ENCODE measurements at regions of chr15 and their contacts with region 1.

Region 1: GRCh38 chr15:43187544-43188155 is 2.4 kb downstream of the CCNDBP1 start:
- DNase-seq: no peak
- ATAC-seq: no peak

Region 2: GRCh38 chr15:42994546-42994945 is 193.1 kb before region 1 on chr15:
- intact Hi-C with region 1: no loop called
- DNase-seq: no peak
- ATAC-seq: no peak

Region 3: GRCh38 chr15:43093026-43093425 is 94.6 kb before region 1 on chr15:
- intact Hi-C with region 1: no loop called
- DNase-seq: no peak
- ATAC-seq: peak in 1 of 2 donors; percentile 44

Region 4: DNA sequence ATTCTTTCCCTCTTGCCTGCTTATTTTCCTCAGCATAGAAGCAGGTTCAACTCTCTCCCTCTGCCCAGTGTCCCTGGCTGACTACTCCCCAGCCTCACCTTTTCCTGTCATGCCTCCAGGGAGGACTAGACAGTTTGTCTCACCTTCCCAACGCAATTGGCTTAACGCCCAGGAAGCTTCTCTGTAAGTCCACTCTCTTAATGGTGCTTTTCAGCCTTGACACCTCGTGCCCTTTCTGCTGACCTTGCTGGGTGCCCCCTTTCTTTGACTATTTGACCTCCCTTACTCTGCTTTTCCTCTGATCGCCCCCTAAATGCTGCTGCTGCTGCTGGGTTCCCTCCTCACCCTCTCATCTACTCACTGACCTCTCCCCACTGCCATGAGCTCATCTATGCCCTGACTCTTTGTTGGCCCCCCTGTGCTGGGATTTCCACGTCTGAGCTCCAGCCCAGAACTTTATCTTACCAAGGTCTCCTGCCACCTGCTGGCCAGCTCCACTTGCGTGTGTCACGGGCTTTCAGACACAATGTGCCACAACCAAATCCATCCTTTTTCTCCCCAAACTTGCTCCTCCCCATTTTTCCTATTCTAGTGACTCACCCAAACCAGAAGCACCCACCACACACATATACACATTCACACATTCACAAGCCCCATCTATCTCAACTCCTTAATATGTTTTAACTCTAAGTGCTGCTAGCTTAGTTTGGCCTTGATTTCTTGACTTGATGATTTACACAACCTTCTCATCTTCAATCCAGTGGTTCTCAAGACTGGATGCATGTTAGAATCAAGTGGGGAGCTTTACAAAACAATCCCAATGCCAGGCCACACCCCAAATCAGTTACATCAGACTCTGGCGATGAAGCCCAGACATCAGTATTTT is 16.6 kb after region 1 on chr15:
- intact Hi-C with region 1: loop called in 1 of 2 experiments (anchors 1 kb)
- DNase-seq: peak; percentile 65
- ATAC-seq: peak; percentile 64 to 73

Region 5: GRCh38 chr15:43440721-43441281 is 253.2 kb after region 1 on chr15:
- intact Hi-C with region 1: no loop called
- DNase-seq: no peak
- ATAC-seq: peak; percentile 96 to 97

Region 6: DNA sequence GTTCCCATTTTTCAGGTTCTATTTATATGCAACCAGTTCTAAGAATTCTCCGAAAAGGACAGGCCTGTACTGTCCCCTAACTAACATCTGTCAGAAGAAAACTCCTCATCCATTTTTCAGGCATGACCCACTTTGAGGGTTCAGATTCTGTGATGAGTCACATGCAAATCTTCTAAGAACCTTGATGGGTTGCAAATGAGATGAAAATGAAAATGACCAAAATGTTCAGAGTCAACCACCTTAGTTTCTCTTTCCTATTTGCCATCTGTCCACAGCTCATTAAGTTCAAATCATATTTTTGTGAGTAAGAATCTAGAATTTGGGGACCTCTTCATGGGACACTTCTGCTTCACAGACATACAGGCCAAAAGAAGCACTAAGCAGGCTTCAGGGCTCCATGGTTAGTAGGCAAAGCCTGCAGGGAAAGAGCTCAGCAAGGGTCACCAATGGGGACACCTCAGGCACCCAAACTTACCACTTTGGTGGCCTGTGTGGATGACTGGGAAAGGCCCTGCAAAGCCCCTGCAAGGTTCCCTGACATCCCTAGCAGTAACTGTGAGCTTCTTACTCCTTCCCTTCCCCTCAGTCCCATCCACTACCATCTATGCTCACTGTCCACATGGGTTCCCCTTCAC is 761.2 kb after region 1 on chr15:
- intact Hi-C with region 1: no loop called
- DNase-seq: no peak
- ATAC-seq: no peak

Measured in left cardiac atrium (tissue), 4 donors.